ENCODE measurements at regions of chr1 and their contacts with region 1.

Region 1: GRCh38 chr1:112619520-112620376 is at the start of gene CAPZA1:
- DNase-seq: peak; percentile 94
- H3K4me3 ChIP-seq: peak within 1 kb of the TSS; percentile 94 to 98 (median 98)
- H3K27ac ChIP-seq: peak within 1 kb of the TSS; percentile 91
- H3K4me1 ChIP-seq: peaks cover 32% of the 10 kb centered on the region
- H3K27me3 ChIP-seq: no peaks in the 10 kb centered on the region
- CTCF ChIP-seq: no peak
- POLR2A ChIP-seq: peak; percentile 98
- total RNA-seq, gene CAPZA1: 177 and 183 TPM in 2 replicates

Region 2: DNA sequence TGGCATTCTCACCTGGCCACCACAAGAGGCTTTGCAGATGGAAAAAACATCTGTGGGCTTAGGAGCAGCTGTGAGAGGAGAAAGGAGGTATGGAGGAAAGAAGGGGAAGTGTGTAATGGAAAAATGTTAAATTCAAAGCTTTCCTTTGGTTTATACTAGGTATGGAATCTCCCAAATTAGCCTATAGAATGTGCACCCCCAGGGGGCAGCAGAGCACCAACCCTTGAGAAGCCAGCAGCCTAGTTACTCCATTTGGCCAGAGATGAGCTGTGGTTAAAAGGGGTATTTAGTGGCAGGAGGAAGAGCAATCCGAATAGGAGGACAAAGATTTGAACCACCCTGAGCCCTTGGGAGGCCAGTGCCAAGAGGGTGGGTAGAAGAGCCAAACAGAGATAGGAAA is 321.2 kb before region 1 on chr1:
- CTCF ChIA-PET with region 1: no interaction called
- POLR2A ChIA-PET with region 1: no interaction called
- dilution Hi-C with region 1: no loop called
- intact Hi-C with region 1: loop called (anchors 2 kb)
- DNase-seq: peak; percentile 72
- H3K4me3 ChIP-seq: no peak overlapping the region
- H3K27ac ChIP-seq: no peak overlapping the region
- H3K4me1 ChIP-seq: no peaks in the 10 kb centered on the region
- H3K27me3 ChIP-seq: peaks cover 6% of the 10 kb centered on the region in 2 experiments
- CTCF ChIP-seq: peak; percentile 76 to 83
- POLR2A ChIP-seq: no peak

Region 3: DNA sequence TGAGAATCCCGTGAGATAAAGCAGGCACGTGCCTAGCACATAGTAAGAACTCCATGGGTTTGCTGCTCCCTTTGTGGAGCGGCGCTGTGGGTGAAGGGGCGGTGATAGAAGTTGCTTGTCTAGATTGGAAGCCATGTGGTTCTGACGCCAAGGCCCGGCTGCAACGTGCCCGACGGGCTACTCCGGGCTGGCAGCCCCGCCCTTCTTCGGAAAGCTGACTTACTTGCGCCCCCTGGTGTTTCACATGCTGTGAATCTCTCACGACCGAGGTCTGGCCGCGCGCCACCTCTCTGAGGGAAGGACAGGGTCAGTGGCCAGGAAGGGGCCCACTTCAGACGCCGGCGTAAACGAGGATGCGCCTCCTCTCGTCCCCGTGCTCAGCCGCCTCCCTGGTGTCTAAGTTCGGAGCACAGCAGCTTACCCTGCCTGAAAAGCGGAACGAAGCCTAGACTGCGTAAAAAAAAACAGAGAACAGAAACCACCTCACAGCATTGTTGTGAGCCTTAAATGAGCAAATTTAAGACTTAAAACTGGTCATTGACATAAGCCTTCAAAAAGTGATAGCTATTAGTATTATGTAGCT is 153.6 kb before region 1 on chr1:
- CTCF ChIA-PET with region 1: no interaction called
- POLR2A ChIA-PET with region 1: no interaction called
- dilution Hi-C with region 1: no loop called
- intact Hi-C with region 1: loop called (anchors 1 kb)
- DNase-seq: peak; percentile 97
- H3K4me3 ChIP-seq: peak overlapping the region in 1 of 3 experiments; percentile 5
- H3K27ac ChIP-seq: peak overlapping the region; percentile 59
- H3K4me1 ChIP-seq: peaks cover 28% of the 10 kb centered on the region
- H3K27me3 ChIP-seq: no peaks in the 10 kb centered on the region
- CTCF ChIP-seq: peak; percentile 82 to 85
- POLR2A ChIP-seq: peak; percentile 71

Region 4: DNA sequence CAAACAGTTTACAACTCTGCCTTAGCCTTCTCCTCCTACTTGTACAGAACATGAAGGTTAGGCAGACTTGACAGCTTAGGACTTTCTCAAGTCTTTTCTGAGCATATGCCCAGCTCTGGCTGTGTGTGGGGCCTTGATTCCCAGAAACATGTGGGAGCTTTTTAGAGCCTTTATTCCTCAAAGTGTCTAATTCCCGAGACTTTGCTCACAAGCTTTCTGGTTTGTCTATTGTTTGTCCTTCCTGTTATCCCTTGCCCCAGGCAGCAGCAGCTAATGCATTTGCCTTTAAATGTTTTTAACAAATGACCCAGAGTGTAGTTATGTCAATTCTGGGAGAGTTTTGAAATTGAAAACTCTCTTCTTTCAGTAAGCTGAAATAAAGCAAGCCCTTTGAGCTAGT is 30.0 kb before region 1 on chr1:
- CTCF ChIA-PET with region 1: no interaction called
- POLR2A ChIA-PET with region 1: no interaction called
- dilution Hi-C with region 1: no loop called
- intact Hi-C with region 1: no loop called
- DNase-seq: no peak
- H3K4me3 ChIP-seq: no peak overlapping the region
- H3K27ac ChIP-seq: no peak overlapping the region
- H3K4me1 ChIP-seq: peaks cover 20% of the 10 kb centered on the region
- H3K27me3 ChIP-seq: no peaks in the 10 kb centered on the region
- CTCF ChIP-seq: no peak
- POLR2A ChIP-seq: no peak

Region 5: GRCh38 chr1:112637254-112638116 is 17.7 kb after region 1 on chr1:
- CTCF ChIA-PET with region 1: interaction called, 5 read pairs
- POLR2A ChIA-PET with region 1: interaction called, 5 read pairs
- dilution Hi-C with region 1: no loop called
- intact Hi-C with region 1: loop called (anchors 1 kb)
- DNase-seq: no peak
- H3K4me3 ChIP-seq: no peak overlapping the region
- H3K27ac ChIP-seq: peak overlapping the region; percentile 66
- H3K4me1 ChIP-seq: peaks cover 26% of the 10 kb centered on the region
- H3K27me3 ChIP-seq: no peaks in the 10 kb centered on the region
- CTCF ChIP-seq: no peak
- POLR2A ChIP-seq: no peak

Region 6: GRCh38 chr1:112700290-112701226 is 80.8 kb after region 1 on chr1:
- CTCF ChIA-PET with region 1: no interaction called
- POLR2A ChIA-PET with region 1: interaction called, 3 read pairs
- dilution Hi-C with region 1: no loop called
- intact Hi-C with region 1: loop called (anchors 1 kb)
- DNase-seq: peak; percentile 100
- H3K4me3 ChIP-seq: no peak overlapping the region
- H3K27ac ChIP-seq: peak overlapping the region; percentile 88
- H3K4me1 ChIP-seq: peaks cover 67% of the 10 kb centered on the region
- H3K27me3 ChIP-seq: no peaks in the 10 kb centered on the region
- CTCF ChIP-seq: no peak
- POLR2A ChIP-seq: peak; percentile 83

Region 7: GRCh38 chr1:112911506-112911905 is 291.8 kb after region 1 on chr1:
- CTCF ChIA-PET with region 1: no interaction called
- POLR2A ChIA-PET with region 1: no interaction called
- dilution Hi-C with region 1: no loop called
- intact Hi-C with region 1: no loop called
- DNase-seq: no peak
- H3K4me3 ChIP-seq: no peak overlapping the region
- H3K27ac ChIP-seq: no peak overlapping the region
- H3K4me1 ChIP-seq: peaks cover 14% of the 10 kb centered on the region
- H3K27me3 ChIP-seq: no peaks in the 10 kb centered on the region
- CTCF ChIP-seq: no peak
- POLR2A ChIP-seq: no peak

Measured in endothelial cell of umbilical vein (primary cell).